ENCODE measurements at regions of chr12 and their contacts with region 1.

Region 1: GRCh38 chr12:58540480-58541299 is 379.6 kb downstream of the LRIG3 start:
- DNase-seq: peak; percentile 60
- ATAC-seq: peak; percentile 99
- H3K4me3 ChIP-seq: no peak overlapping the region
- H3K27ac ChIP-seq: no peak overlapping the region
- H3K4me1 ChIP-seq: no peaks in the 10 kb centered on the region
- H3K27me3 ChIP-seq: no peaks in the 10 kb centered on the region
- CTCF ChIP-seq: peak; percentile 91
- EP300 ChIP-seq: no peak
- POLR2A ChIP-seq: no peak
- RAD21 ChIP-seq: peak; percentile 74; the same call in 1 of the 2 replicates

Region 2: DNA sequence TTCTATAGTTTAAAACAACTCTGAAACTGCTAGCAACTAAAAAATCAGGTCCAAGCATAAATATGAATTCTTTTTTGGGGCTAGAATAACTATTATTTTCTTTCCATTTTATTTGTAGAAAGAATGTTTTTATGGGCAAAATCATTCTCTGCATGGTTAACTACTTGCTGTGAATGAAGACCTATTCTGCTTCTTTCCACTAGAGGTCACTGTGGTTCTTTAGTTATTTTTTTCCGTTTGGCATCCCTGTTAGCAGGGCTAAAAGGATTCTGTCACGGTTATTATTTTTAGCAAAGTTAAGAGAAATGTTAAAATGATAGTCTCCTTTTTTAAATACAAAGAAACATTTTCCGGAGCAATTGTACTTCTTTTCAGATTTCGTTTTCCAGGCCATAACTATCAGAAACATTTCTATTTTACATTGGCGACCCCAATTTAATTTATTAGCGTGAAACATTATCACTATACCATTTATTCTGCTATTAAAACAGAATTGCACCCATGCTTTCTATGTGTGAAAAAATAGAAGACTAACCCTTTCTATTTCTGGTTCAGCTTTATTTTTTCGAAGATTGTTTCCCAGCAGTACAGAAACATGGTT is 194.6 kb before region 1 on chr12:
- CTCF ChIA-PET with region 1: no interaction called
- POLR2A ChIA-PET with region 1: no interaction called
- in situ Hi-C with region 1: no loop called
- intact Hi-C with region 1: loop called (anchors 1 kb)
- DNase-seq: peak; percentile 4
- ATAC-seq: peak; percentile 51; the same call in 1 of the 3 replicates
- H3K4me3 ChIP-seq: no peak overlapping the region
- H3K27ac ChIP-seq: no peak overlapping the region
- H3K4me1 ChIP-seq: no peaks in the 10 kb centered on the region
- H3K27me3 ChIP-seq: no peaks in the 10 kb centered on the region
- CTCF ChIP-seq: peak; percentile 62
- EP300 ChIP-seq: no peak
- POLR2A ChIP-seq: no peak
- RAD21 ChIP-seq: peak; percentile 30; the same call in 1 of the 2 replicates

Region 3: DNA sequence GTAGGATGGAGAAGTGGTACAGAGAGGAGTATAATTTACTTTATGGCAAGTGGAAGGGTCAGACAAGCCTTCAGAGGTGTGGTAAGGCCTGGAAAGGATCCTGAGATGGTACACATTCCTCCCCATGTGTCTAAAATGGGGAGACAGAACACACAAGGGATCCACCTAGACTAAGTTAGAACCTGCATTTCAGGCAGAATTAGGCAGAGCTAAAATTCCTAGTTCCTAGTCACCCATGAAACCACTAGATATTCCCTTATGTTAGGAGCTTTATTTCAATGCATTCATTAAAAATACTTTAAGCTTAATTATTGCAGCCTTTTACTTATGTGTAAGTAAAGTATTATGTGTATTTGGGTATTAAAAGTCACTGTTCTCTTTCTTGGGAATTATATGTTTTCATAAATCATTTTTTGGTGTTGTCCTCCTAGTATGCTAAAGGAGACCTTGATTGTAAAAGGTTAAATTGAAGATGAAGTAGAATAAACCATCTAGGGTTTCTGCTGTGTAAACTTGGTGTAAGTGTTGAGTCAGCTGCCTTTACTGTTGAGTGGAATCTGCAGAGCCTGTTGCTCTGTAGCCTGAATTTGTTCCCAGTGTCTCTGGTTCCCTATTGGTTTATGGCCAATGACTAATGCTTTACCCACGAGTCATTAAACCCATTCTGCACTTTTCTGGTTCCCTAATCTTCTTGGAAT is 176.2 kb before region 1 on chr12:
- CTCF ChIA-PET with region 1: no interaction called
- POLR2A ChIA-PET with region 1: no interaction called
- in situ Hi-C with region 1: no loop called
- intact Hi-C with region 1: no loop called
- DNase-seq: no peak
- ATAC-seq: no peak
- H3K4me3 ChIP-seq: no peak overlapping the region
- H3K27ac ChIP-seq: no peak overlapping the region
- H3K4me1 ChIP-seq: no peaks in the 10 kb centered on the region
- H3K27me3 ChIP-seq: no peaks in the 10 kb centered on the region
- CTCF ChIP-seq: no peak
- EP300 ChIP-seq: no peak
- POLR2A ChIP-seq: no peak
- RAD21 ChIP-seq: no peak

Region 4: GRCh38 chr12:58804749-58805148 is 264.1 kb after region 1 on chr12:
- CTCF ChIA-PET with region 1: no interaction called
- POLR2A ChIA-PET with region 1: no interaction called
- in situ Hi-C with region 1: no loop called
- intact Hi-C with region 1: loop called (anchors 1 kb)
- DNase-seq: peak; percentile 15
- ATAC-seq: peak; percentile 83
- H3K4me3 ChIP-seq: no peak overlapping the region
- H3K27ac ChIP-seq: no peak overlapping the region
- H3K4me1 ChIP-seq: no peaks in the 10 kb centered on the region
- H3K27me3 ChIP-seq: no peaks in the 10 kb centered on the region
- CTCF ChIP-seq: peak; percentile 50
- EP300 ChIP-seq: no peak
- POLR2A ChIP-seq: no peak
- RAD21 ChIP-seq: no peak

Region 5: DNA sequence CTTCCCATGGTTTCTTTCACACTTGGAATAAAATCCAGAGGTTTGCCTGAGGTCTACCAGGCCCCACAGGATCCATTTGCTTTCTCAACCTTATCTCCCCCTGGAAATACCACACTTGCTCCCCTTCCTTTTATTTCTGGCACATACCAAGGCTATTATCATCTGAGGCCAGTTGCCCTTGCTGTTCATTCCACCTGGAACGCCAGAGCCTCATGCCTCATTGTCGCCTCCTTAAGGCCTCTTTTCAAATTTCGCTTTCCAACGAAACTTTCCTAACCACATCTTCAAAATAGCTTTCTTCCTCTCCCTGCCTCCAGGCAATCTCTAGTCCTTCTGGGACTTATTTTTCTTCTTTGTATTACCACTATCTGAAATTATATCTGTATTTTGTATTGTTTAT is 390.8 kb after region 1 on chr12:
- CTCF ChIA-PET with region 1: interaction called, 3 read pairs
- POLR2A ChIA-PET with region 1: no interaction called
- in situ Hi-C with region 1: no loop called
- intact Hi-C with region 1: loop called (anchors 1 kb)
- DNase-seq: no peak
- ATAC-seq: peak; percentile 62
- H3K4me3 ChIP-seq: no peak overlapping the region
- H3K27ac ChIP-seq: no peak overlapping the region
- H3K4me1 ChIP-seq: no peaks in the 10 kb centered on the region
- H3K27me3 ChIP-seq: no peaks in the 10 kb centered on the region
- CTCF ChIP-seq: peak; percentile 61
- EP300 ChIP-seq: no peak
- POLR2A ChIP-seq: no peak
- RAD21 ChIP-seq: no peak

Region 6: DNA sequence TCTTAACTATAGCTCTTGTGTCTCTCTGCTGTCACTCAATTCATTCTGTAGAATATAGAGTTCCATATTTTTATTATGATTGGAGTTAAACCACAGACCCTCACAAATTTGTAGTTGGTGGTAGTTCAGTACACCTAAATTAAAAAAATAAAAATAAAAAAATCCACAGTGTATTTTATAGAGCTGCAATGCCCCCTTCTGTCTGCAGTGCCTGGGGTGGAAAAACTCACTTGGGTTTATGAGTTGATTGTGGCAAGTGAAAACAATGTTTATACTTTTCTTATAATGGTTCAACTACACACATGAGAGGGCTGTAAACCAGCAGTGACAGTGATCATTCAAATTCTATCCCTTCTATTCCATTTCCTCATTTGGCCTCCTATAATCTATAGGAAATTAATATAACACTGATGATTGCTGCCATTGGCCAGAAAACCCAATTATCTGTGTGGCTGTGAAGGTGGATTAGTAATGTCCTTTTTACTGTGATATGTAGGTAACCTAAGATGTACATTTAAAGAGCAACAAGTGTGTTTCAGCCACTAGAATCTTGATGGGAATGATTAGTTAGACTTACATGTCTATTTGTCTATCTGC is 546.5 kb after region 1 on chr12:
- CTCF ChIA-PET with region 1: no interaction called
- POLR2A ChIA-PET with region 1: no interaction called
- in situ Hi-C with region 1: no loop called
- intact Hi-C with region 1: loop called (anchors 1 kb)
- DNase-seq: no peak
- ATAC-seq: no peak
- H3K4me3 ChIP-seq: no peak overlapping the region
- H3K27ac ChIP-seq: no peak overlapping the region
- H3K4me1 ChIP-seq: no peaks in the 10 kb centered on the region
- H3K27me3 ChIP-seq: no peaks in the 10 kb centered on the region
- CTCF ChIP-seq: no peak
- EP300 ChIP-seq: no peak
- POLR2A ChIP-seq: no peak
- RAD21 ChIP-seq: no peak

Region 7: DNA sequence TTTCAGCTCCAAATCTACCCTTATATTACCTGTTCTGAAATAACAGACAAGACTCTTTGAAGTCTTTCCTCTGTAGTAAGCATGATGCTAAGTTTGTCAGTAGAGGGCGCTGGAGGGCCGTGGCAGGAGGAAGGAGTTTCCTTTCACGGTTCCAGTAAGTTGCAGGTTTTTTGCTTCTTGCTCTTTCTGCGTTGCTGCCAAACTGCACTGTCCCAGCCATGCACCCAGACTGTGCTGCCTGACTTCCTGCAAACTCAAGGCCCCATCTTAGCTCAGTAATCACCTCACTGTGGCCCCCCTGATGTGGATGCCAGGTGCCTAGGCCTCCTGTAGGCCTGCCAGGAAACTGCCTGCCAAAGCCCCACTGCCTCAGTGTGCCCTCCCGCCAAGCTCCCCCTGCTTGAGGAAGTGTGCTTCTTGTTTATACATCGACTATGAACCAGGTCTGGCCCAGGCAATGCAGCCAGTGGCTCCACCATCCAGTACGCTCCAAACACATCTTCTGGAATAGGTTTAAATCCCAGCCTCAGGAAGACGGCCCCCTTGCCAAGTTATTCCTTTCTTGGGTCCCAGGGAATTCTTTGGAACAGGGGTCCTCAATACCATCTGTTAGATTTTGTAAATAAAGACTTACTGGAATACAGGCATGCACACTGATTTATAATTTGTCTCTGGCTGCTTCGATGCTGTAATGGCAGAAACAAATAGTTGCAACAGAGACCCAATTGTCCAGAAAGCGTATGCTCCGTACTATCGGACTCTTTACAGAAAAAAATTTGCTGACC is 573.3 kb after region 1 on chr12:
- CTCF ChIA-PET with region 1: interaction called, 6 read pairs
- POLR2A ChIA-PET with region 1: no interaction called
- in situ Hi-C with region 1: no loop called
- intact Hi-C with region 1: loop called (anchors 1 kb)
- DNase-seq: peak; percentile 63
- ATAC-seq: peak; percentile 97
- H3K4me3 ChIP-seq: peak overlapping the region in 1 of 3 experiments; percentile 40; a peak in 1 of 6 replicates
- H3K27ac ChIP-seq: no peak overlapping the region
- H3K4me1 ChIP-seq: no peaks in the 10 kb centered on the region
- H3K27me3 ChIP-seq: no peaks in the 10 kb centered on the region
- CTCF ChIP-seq: peak; percentile 82
- EP300 ChIP-seq: no peak
- POLR2A ChIP-seq: no peak
- RAD21 ChIP-seq: peak; percentile 64; the same call in 1 of the 2 replicates

Region 8: GRCh38 chr12:59149997-59150642 is 609.4 kb after region 1 on chr12:
- CTCF ChIA-PET with region 1: interaction called, 43 read pairs
- POLR2A ChIA-PET with region 1: no interaction called
- in situ Hi-C with region 1: loop called (anchors 5 kb)
- intact Hi-C with region 1: loop called (anchors 1 kb)
- DNase-seq: peak; percentile 77
- ATAC-seq: peak; percentile 96
- H3K4me3 ChIP-seq: no peak overlapping the region
- H3K27ac ChIP-seq: no peak overlapping the region
- H3K4me1 ChIP-seq: no peaks in the 10 kb centered on the region
- H3K27me3 ChIP-seq: no peaks in the 10 kb centered on the region
- CTCF ChIP-seq: peak; percentile 92
- EP300 ChIP-seq: no peak
- POLR2A ChIP-seq: no peak
- RAD21 ChIP-seq: peak; percentile 76